Natural killer cell (primary cell): ENCODE measurements at regions of chr14 and their contacts with region 1.

Region 1: DNA sequence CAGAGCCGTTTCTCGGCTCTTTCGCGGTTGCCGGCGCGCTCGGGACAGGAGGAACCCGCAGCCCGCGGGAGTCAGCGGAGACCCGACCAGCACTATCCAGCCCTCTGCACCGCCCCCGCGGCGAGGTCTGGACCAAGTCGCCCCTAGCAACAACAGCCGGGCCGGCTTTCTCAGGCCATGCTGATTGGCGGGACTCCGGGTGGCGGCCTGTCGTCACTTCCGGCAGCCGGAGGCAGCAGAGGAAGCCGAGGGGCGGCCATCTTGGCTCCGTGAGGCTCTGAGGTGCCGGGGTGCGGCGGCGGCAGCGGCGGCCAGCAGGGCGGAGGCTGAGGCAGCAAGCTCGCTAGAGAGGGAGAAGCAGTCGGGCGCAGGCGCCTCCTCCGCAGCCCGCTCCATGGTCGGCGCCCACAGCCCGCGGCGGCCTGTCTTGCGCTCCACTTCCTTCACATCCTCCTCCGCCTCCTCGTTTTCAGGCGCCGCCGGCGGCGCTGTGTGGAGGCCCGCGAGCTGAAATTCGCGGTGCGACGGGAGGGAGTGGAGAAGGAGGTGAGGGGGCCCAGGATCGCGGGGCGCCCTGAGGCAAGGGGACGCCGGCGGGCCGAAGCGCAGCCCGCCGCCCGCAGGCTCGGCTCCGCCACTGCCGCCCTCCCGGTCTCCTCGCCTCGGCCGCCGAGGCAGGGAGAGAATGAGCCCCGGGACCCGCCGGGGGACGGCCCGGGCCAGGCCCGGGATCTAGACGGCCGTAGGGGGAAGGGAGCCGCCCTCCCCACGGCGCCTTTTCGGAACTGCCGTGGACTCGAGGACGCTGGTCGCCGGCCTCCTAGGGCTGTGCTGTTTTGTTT is at the start of gene MARK3:
- DNase-seq: peak; percentile 96 to 97
- ATAC-seq: peak; percentile 85 to 95 (median 89)
- H3K4me3 ChIP-seq: peak within 1 kb of the TSS; percentile 50
- H3K4me3 Mint-ChIP-seq: peak within 1 kb of the TSS; percentile 95
- H3K27ac ChIP-seq: peak within 1 kb of the TSS; percentile 87
- H3K27ac Mint-ChIP-seq: peak within 1 kb of the TSS; percentile 94 to 97
- H3K4me1 ChIP-seq: peaks cover 30% of the 10 kb centered on the region
- H3K4me1 Mint-ChIP-seq: peaks cover 37 to 53% of the 10 kb centered on the region in 2 donors
- H3K27me3 ChIP-seq: no peaks in the 10 kb centered on the region
- H3K27me3 Mint-ChIP-seq: no peaks in the 10 kb centered on the region
- CTCF ChIP-seq: peak; percentile 9
- total RNA-seq, gene MARK3: 138 to 167 (median 152) TPM

Region 2: GRCh38 chr14:103333754-103334643 is 51.4 kb before region 1 on chr14 and contains the start of gene EIF5:
- intact Hi-C with region 1: loop called (anchors 1 kb)
- DNase-seq: peak; percentile 98 to 100
- ATAC-seq: peak; percentile 82 to 94 (median 87)
- H3K4me3 ChIP-seq: peak within 1 kb of the TSS; percentile 95
- H3K4me3 Mint-ChIP-seq: peak within 1 kb of the TSS; percentile 96
- H3K27ac ChIP-seq: peak within 1 kb of the TSS; percentile 98
- H3K27ac Mint-ChIP-seq: peak within 1 kb of the TSS; percentile 92 to 99
- H3K4me1 ChIP-seq: peaks cover 30% of the 10 kb centered on the region
- H3K4me1 Mint-ChIP-seq: peaks cover 34 to 41% of the 10 kb centered on the region in 2 donors
- H3K27me3 ChIP-seq: no peaks in the 10 kb centered on the region
- H3K27me3 Mint-ChIP-seq: no peaks in the 10 kb centered on the region
- CTCF ChIP-seq: peak; percentile 44
- total RNA-seq, gene EIF5: 498 to 670 (median 594) TPM

Region 3: GRCh38 chr14:103427485-103428443 is 42.4 kb after region 1 on chr14:
- intact Hi-C with region 1: loop called (anchors 5 kb)
- DNase-seq: peak in 1 of 2 donors; percentile 44
- ATAC-seq: peak; percentile 45 to 73 (median 66)
- H3K4me3 ChIP-seq: no peak overlapping the region
- H3K4me3 Mint-ChIP-seq: no peak overlapping the region
- H3K27ac ChIP-seq: peak overlapping the region; percentile 41
- H3K27ac Mint-ChIP-seq: peak overlapping the region; percentile 76 to 87
- H3K4me1 ChIP-seq: peaks cover 5% of the 10 kb centered on the region
- H3K4me1 Mint-ChIP-seq: peaks cover 55 to 56% of the 10 kb centered on the region in 2 donors
- H3K27me3 ChIP-seq: no peaks in the 10 kb centered on the region
- H3K27me3 Mint-ChIP-seq: no peaks in the 10 kb centered on the region
- CTCF ChIP-seq: no peak